Gastrocnemius medialis (tissue), 4 donors: ENCODE measurements at regions of chr10 and their contacts with region 1.

Region 1: GRCh38 chr10:96831867-96832720 is at the start of gene LCOR:
- DNase-seq: peak; percentile 71 to 82
- ATAC-seq: peak; percentile 79 to 82
- H3K4me3 ChIP-seq: peak within 1 kb of the TSS; percentile 81 to 90 (median 86)
- H3K27ac ChIP-seq: peak within 1 kb of the TSS; percentile 94 to 99 (median 98)
- H3K4me1 ChIP-seq: peaks cover 37 to 47% of the 10 kb centered on the region in 2 donors
- H3K27me3 ChIP-seq: no peaks in the 10 kb centered on the region
- CTCF ChIP-seq: peak in 1 of 5 experiments; percentile 28
- POLR2A ChIP-seq: peak; percentile 84 to 87
- total RNA-seq, gene LCOR: 9.2 to 20.0 (median 14.6) TPM

Region 2: GRCh38 chr10:96374985-96375830 is 456.9 kb before region 1 on chr10:
- in situ Hi-C with region 1: loop called in 1 of 4 experiments (anchors 10 kb)
- intact Hi-C with region 1: loop called (anchors 5 kb)
- DNase-seq: peak; percentile 61 to 77
- ATAC-seq: peak; percentile 97
- H3K4me3 ChIP-seq: peak overlapping the region; percentile 38 to 71 (median 52)
- H3K27ac ChIP-seq: no peak overlapping the region
- H3K4me1 ChIP-seq: peaks cover 0 to 6% of the 10 kb centered on the region in 2 donors
- H3K27me3 ChIP-seq: no peaks in the 10 kb centered on the region
- CTCF ChIP-seq: peak; percentile 74 to 95 (median 85)
- POLR2A ChIP-seq: no peak

Region 3: GRCh38 chr10:96395931-96396877 is 435.9 kb before region 1 on chr10:
- in situ Hi-C with region 1: loop called in 1 of 4 experiments (anchors 10 kb)
- intact Hi-C with region 1: loop called (anchors 5 kb)
- DNase-seq: peak; percentile 45 to 49
- ATAC-seq: peak; percentile 60 to 77
- H3K4me3 ChIP-seq: no peak overlapping the region
- H3K27ac ChIP-seq: no peak overlapping the region
- H3K4me1 ChIP-seq: peaks cover 0 to under 1% of the 10 kb centered on the region in 2 donors
- H3K27me3 ChIP-seq: peaks cover 0 to 15% (median 0%) of the 10 kb centered on the region in 3 donors
- CTCF ChIP-seq: peak; percentile 69 to 85 (median 78)
- POLR2A ChIP-seq: no peak

Region 4: GRCh38 chr10:96586419-96587263 is 245.5 kb before region 1 on chr10 and contains the start of gene TM9SF3:
- in situ Hi-C with region 1: no loop called
- intact Hi-C with region 1: loop called (anchors 2 kb)
- DNase-seq: peak; percentile 90
- ATAC-seq: peak; percentile 89 to 92
- H3K4me3 ChIP-seq: peak within 1 kb of the TSS; percentile 78 to 95 (median 84)
- H3K27ac ChIP-seq: peak within 1 kb of the TSS; percentile 91 to 97 (median 95)
- H3K4me1 ChIP-seq: peaks cover 34 to 47% of the 10 kb centered on the region in 2 donors
- H3K27me3 ChIP-seq: no peaks in the 10 kb centered on the region
- CTCF ChIP-seq: peak in 2 of 5 experiments; percentile 19 to 25
- POLR2A ChIP-seq: peak; percentile 96 to 98
- total RNA-seq, gene TM9SF3: 27.5 to 32.4 (median 31.0) TPM

Region 5: DNA sequence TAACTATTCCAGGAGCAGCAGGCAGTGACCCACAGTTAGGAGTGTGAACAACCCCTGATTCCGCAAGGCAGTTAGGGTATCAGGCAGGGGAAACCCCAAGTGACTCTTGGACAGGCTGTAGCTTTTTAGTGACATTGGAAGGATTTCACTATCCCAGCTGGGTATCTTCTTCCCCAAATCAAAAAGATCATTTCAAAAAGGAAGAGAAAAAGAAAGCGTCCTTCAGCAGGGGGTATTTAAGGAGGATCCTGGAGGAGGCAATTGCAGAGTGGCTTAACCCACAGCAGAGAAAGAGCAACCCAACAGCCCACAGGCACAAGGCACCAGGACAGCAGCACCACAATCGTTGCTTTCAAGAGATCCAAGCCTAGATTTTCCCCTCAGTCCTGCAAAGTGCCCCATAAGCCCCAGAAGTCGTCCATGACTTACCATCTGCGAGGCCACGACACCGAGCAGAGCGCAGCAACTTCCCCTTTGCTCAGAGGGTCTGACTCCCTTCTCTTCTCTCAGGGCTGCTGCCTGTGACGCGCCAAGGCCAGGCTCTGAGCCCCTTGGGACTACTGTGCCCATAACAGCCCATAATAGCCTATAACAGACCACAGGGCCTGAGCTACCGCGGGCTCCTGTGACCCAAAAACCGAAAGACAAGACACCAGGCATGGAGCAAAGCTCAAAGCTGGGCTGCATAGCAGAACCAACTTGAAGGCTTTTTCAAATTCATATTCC is 131.6 kb before region 1 on chr10:
- in situ Hi-C with region 1: no loop called
- intact Hi-C with region 1: no loop called
- DNase-seq: no peak
- ATAC-seq: no peak
- H3K4me3 ChIP-seq: no peak overlapping the region
- H3K27ac ChIP-seq: no peak overlapping the region
- H3K4me1 ChIP-seq: no peaks in the 10 kb centered on the region
- H3K27me3 ChIP-seq: no peaks in the 10 kb centered on the region
- CTCF ChIP-seq: no peak
- POLR2A ChIP-seq: no peak

Region 6: DNA sequence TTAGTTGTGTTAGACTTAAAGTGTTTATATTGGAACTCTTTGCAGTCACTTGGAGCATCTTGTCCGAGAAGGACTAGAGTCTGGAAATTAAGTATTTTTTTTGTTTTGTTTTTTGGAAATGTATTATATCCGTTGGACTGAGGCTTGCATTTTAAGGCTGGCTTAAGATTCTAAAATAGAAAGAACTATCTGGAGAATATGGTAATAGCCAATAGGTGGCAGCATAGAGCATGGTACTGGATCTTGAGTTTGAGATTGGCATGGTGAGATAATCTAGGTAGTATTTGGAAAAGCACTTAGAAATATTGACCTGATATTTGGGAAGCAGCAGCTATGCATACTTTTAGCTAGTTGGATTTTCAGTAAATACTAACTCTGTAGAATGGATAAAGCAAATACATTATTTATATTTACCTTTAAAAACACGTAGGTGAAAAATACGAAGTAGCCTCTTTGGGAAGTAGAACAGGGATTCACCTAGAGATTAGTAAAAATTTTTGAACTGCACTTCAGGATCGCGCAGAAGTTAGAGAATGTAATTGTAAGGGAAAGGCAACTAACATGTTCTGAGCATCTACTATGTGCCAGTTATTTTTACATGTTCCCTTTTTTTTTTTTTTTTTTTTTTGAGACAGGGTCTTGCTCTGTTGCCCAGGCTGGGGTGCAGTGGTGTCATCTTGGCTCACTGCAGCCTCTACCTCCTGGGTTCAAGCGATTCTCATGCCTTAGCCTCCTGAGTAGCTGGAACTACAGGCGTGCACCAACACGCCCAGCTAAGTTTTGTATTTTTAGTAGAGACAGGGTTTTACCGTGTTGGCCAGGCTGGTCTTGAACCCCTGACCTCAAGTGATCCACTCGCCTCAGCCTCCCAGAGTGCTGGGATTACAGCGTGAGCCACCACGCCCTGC is 78.6 kb after region 1 on chr10:
- in situ Hi-C with region 1: no loop called
- intact Hi-C with region 1: loop called (anchors 5 kb)
- DNase-seq: no peak
- ATAC-seq: peak; percentile 74 to 89
- H3K4me3 ChIP-seq: no peak overlapping the region
- H3K27ac ChIP-seq: peak overlapping the region in 3 of 4 donors; percentile 9 to 61 (median 58)
- H3K4me1 ChIP-seq: peaks cover 41 to 64% of the 10 kb centered on the region in 2 donors
- H3K27me3 ChIP-seq: no peaks in the 10 kb centered on the region
- CTCF ChIP-seq: peak; percentile 52 to 79 (median 67)
- POLR2A ChIP-seq: no peak

Region 7: DNA sequence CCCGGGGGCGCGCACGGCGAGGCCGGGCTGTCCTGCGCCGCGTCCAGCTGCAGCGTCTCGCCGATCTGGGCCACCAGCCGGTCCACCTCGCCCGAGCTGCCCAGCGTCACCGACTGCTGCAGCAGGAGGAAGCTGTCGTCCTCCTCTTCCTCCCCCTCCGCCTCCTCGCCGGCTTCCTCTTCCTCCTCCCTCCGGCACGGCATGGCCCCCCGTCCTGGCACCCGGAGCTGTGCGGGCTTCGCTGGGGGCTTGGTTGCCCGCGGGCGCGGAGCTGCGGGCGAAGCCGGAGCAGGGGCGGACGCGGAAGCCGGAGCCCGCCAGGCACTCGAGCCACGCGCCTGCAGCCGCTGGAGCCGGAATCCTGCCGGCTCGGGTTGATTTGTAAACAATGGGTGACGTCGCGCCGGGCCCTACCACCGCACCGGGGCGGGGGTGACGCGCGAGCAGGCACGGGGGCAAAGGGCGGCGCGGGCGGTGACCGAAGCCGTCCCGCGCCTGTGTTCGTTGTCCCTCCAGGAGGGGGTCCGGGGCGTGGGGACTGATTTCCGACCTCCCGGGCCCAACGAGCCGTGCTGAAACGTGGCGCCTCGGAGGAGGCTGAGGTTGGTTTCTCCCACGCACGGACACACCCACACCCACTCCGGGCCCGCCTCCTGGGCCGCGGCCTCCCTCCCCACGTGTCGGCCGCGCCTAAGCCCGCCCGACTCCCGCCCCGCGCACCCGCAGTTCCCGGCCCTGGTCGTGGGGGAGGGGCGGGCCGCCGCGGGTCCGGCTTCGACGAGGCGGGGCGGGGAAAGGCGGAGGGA is 502.5 kb after region 1 on chr10 and contains the start of gene FRAT2:
- in situ Hi-C with region 1: no loop called
- intact Hi-C with region 1: loop called (anchors 10 kb)
- DNase-seq: peak; percentile 87 to 88
- ATAC-seq: peak; percentile 88 to 91
- H3K4me3 ChIP-seq: peak within 1 kb of the TSS; percentile 72 to 100 (median 88)
- H3K27ac ChIP-seq: peak within 1 kb of the TSS; percentile 83 to 98 (median 90)
- H3K4me1 ChIP-seq: peaks cover 36 to 43% of the 10 kb centered on the region in 2 donors
- H3K27me3 ChIP-seq: no peaks in the 10 kb centered on the region
- CTCF ChIP-seq: no peak
- POLR2A ChIP-seq: peak; percentile 80 to 92
- total RNA-seq, gene FRAT2: 9.3 to 28.7 (median 20.5) TPM